Astrocyte of the cerebellum (primary cell): ENCODE measurements at regions of chr6 and their contacts with region 1.

Region 1: DNA sequence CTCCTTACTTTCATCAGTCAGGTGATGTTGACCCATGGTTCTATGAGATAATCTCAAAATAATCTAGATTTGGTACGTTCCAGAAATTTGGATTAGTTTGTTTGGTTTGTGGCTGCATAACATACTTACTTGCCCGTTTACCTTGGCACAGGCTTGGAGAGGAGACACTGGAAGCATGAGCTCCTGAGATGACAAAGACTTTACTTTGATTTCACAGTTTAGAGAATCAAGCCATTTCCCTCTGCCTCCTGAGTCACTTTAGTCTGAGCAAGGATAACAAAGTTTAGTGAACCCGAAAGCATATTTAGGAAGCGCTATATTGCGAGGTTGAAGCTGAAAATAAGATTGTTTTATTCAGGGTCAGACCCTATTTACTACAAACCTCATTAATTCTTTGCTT is 643.4 kb downstream of the QKI start:
- DNase-seq: no peak
- H3K4me3 ChIP-seq: no peak overlapping the region
- CTCF ChIP-seq: no peak

Region 2: GRCh38 chr6:164005014-164005711 is 52.7 kb before region 1 on chr6:
- in situ Hi-C with region 1: loop called (anchors 5 kb)
- DNase-seq: no peak
- H3K4me3 ChIP-seq: no peak overlapping the region
- CTCF ChIP-seq: no peak

Region 3: DNA sequence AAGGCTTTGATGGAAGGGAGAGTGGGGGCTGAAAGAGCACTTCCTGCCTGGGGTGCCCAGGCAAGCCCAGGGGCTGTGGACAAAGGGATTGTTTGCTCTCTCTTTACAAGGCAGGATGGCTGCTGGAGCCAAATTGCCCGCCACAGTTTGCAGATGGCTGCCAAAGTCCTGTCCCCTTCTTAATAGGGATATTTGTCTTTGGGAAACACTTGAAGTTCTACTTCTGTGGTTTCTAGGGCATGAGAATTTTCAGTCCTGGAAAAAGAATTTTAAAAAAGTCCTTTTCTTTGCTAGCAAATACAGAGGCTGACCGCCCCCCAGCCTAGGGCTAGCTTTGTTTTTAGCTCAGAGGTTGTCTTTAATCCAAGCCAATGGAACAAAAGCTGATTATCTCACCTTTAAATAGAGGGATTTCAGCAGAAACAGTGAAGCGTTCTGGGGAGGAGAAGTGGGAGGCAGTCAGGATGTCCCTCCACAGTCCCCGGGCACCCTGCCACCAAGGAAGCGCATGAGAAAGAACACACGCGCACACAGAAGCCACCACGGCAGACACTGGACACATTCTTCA is 93.4 kb after region 1 on chr6:
- in situ Hi-C with region 1: no loop called
- DNase-seq: peak; percentile 44
- H3K4me3 ChIP-seq: no peak overlapping the region
- CTCF ChIP-seq: no peak

Region 4: DNA sequence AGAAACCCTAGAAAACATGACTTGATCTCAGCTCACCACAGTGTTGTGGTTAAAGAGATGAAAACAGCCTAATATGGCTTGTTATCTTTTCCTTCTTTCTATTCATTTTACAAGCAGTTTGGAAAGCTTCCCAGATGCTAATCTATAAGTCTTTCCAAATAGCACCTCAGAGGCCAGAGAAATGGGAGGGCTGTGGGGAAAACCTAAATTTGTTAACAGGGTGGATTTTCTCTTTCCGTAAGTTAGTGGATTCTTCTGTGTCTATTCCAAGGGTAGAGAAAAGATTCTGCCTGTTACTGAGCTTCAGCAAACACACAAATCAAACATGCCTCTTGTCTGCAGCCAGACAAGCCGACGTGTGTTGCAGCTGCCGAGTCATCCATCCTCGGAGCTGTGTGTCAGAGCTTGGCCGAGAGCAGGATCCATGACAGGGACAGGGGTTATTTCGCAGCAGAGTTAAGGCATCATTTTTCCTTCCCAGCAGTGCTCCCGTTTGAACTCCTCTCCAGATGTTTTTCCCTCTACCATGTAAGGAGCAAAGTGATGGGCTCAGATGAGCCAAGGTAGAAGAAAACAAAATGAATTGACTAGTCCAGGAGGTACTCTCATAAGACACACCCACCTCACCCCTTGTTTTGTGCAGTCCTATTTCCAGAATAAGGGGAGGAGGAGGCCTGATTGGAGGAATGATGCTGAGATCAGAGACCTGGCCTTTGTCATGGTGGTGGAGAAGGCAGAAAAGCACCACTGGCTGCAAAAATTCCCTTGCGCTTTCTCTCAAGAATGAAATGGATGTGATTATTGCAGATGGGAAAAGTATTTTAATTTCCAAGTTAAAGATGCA is 691.6 kb after region 1 on chr6:
- in situ Hi-C with region 1: no loop called
- DNase-seq: peak; percentile 46
- H3K4me3 ChIP-seq: no peak overlapping the region
- CTCF ChIP-seq: no peak